Aorta (tissue), 5 donors: ENCODE measurements at regions of chr15 and their contacts with region 1.

Region 1: DNA sequence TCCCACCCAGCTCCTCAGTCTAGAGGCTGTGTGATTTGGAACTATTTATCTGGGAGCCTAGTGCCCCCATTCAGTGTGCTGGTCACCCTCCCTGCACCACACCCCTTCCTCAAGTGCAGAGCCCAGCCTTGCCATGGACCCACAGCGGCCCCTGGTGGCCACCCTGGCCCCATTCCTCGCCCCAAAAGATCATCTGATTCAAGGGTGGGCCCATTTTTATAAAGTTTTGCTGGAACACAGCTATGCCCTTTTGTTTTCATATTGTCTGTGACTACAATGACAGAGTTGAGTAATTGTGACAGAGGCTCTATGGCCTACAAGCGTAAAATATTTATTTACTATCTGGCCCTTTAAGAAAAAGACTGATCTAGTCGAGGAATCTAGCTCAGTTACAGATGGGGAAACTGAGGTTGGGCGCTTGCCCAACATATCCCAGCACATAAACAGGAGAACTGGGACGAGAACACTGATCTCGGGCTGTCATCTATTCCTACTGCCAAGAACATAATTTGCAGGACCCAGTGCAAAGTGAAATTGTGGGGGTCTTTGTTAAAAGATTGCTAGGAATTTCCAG is 1.8 kb downstream of the FES start:
- DNase-seq: peak; percentile 89 to 93
- ATAC-seq: peak; percentile 84
- H3K4me3 ChIP-seq: no peak overlapping the region
- H3K27ac ChIP-seq: no peak overlapping the region
- H3K4me1 ChIP-seq: no peaks in the 10 kb centered on the region
- H3K27me3 ChIP-seq: no peaks in the 10 kb centered on the region

Region 2: GRCh38 chr15:90320061-90320884 is 565.9 kb before region 1 on chr15:
- intact Hi-C with region 1: loop called in 1 of 2 experiments (anchors 10 kb)
- DNase-seq: peak; percentile 84 to 89
- ATAC-seq: peak; percentile 91
- H3K4me3 ChIP-seq: no peak overlapping the region
- H3K27ac ChIP-seq: peak overlapping the region in 1 of 2 donors; percentile 16
- H3K4me1 ChIP-seq: peaks cover 0 to 2% of the 10 kb centered on the region in 2 donors
- H3K27me3 ChIP-seq: no peaks in the 10 kb centered on the region

Region 3: DNA sequence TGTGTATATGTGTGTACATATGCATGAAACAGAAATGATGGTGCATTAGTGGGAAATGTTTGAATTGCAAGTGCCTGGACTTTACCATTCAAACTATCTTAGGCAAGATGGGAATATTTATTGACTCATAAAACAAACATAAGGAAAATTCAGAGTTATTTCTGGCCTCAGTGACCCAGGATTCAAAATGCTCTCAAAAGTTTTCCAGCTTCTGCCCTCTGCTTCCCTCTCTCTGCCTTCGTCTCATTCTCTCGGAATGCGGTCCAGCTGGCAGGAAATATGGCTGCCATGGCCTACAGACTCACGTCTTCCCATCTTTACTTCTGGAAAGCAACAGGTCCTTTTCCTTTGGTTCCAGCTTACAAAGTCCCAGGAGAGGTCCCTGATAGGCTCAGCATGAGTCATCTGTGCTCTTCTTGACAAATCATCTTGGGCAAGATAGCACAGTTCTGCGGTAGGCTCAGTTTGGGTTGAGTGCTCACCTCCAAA is 542.8 kb before region 1 on chr15:
- intact Hi-C with region 1: loop called in 1 of 2 experiments (anchors 5 kb)
- DNase-seq: peak; percentile 79 to 83
- ATAC-seq: peak; percentile 26
- H3K4me3 ChIP-seq: no peak overlapping the region
- H3K27ac ChIP-seq: peak overlapping the region; percentile 46 to 93
- H3K4me1 ChIP-seq: peaks cover 0 to 4% of the 10 kb centered on the region in 2 donors
- H3K27me3 ChIP-seq: no peaks in the 10 kb centered on the region

Region 4: DNA sequence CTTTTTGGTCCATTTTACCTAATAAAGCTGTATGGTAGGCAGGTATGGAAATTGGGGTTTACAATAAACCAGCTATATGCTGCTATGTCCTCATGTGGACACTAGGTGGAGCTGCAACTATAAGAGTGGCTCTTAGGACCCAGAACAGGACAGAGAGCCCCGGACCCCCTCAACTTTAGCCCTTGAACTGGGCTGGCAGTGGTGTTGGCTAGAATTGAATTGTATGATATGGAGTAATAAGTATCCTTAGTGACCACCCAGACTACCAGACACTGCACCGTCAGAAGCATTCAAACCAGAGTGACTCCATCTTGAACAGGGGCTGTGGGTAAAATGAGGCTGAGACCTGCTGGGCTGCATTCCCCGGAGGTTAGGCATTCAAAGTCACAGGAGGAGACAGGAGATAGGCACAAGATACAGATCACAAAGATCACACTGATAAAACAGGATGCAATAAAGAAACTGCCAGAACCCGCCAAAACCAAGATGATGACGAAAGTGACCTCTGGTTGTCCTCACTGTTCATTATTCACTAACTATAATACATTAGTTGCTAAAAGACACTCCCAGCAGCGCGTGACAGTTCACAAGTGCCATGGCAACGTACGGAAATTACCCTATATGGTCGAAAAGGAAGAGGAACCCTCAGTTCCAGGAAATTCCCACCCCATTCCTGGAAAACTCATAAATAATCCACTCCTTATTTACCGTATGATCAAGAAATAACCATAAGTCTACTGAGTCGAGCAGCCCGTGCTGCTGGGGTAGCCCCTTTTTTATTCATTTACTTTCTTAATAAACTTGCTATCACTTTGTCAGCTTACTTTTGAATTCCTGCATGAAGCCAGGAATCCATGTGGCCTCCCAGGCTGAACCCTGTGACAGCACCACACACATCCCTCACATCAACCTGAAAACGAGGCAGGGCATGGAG is 237.7 kb before region 1 on chr15:
- intact Hi-C with region 1: loop called (anchors 2 kb)
- DNase-seq: peak; percentile 81 to 90
- ATAC-seq: peak; percentile 88
- H3K4me3 ChIP-seq: no peak overlapping the region
- H3K27ac ChIP-seq: no peak overlapping the region
- H3K4me1 ChIP-seq: no peaks in the 10 kb centered on the region
- H3K27me3 ChIP-seq: no peaks in the 10 kb centered on the region

Region 5: DNA sequence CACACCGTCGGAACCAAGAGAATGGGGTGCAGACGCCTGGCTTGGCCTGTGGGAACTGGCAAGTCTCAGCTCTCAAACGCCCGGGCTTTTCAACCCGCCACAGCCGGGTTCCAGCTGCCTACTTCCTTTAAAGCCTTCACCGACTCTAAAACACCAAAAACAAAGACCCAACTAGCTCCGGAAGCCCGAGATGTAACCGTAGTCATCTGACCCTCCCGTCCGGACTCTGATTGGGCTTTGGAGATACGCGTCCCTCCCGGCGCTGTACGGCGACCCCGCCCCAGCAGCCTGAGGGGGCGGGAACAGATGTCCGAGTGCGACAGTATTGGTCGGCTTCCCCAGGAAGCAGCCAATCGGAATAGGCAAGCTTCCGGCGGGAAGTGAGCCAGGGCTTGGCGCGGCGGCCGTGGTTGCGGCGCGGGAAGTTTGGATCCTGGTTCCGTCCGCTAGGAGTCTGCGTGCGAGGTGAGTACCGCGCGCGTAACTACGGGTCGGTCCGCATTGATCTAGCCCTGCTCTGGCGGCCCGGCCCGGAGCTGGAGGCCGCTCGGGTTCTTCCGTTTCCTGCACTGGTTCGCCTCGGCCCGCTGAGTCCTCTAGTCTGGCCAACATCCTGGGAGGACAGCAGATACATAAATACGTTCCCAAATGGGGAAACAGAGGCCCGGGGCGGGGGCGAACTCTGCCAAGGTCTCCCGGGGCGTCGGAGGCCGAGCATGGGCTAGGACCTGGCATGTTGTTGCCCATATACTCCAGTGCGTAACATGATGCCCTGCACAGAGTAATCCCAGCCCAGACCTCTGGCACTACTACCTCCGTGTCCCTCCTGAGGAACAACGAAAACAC is 168.9 kb before region 1 on chr15 and contains the start of gene BLM:
- intact Hi-C with region 1: loop called in 1 of 2 experiments (anchors 10 kb)
- DNase-seq: peak; percentile 98
- ATAC-seq: peak; percentile 100
- H3K4me3 ChIP-seq: peak within 1 kb of the TSS; percentile 53 to 75
- H3K27ac ChIP-seq: peak within 1 kb of the TSS in 1 of 2 donors; percentile 85
- H3K4me1 ChIP-seq: no peaks in the 10 kb centered on the region
- H3K27me3 ChIP-seq: no peaks in the 10 kb centered on the region
- total RNA-seq, gene BLM: 0.94 to 3.2 TPM

Region 6: DNA sequence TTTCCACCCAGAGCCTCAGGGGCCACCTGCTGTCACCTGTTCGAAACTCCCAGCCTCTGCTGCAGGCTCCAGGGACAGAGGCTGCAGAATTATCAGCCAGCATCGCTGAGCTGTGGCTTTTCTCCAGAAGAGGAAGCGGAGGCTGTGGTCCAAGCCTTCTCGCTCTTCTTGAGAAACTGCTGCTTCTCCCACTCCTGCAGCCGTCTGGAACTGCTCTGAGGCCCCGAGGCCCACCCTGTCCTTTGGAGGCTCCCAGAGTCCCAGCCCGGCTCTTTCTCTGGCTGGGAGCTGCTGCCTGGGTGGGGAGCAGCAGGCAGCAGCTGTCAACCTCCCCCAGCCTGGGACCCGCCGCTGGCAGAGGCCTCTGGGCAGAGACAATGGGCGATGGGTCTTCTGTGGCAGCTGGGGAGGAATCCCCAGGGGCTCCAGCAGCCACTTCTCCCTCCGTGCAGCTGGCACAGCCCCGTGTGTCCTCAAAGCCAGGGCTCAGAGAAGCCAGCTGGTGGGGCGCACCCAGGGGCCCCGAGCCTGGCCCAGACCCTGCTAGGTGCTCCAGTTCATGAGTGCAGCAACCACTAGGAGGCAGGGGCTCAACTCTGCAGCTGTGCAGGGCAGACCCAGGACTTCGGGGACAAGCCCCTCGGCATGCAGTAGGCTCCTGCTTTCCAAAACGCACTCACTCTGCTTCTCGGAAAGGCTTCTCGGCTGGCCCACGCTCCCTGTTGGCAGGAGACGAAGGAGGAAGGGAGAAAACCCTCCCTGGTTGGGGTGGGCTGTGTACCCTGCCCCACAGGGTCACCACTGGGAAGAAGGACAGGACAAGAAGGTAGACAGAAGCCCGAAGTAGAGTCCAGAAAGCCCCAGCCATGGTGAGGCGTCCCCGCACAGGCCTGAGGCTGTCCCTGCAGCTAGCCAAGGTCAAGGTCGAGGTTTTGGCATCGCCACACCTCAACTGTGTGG is 67.6 kb before region 1 on chr15:
- intact Hi-C with region 1: no loop called
- DNase-seq: peak in 1 of 2 donors; percentile 59
- ATAC-seq: no peak
- H3K4me3 ChIP-seq: no peak overlapping the region
- H3K27ac ChIP-seq: no peak overlapping the region
- H3K4me1 ChIP-seq: no peaks in the 10 kb centered on the region
- H3K27me3 ChIP-seq: no peaks in the 10 kb centered on the region